H1 (cell line): ENCODE measurements at regions of chr17 and their contacts with region 1.

Region 1: GRCh38 chr17:11935734-11936406 is 61.4 kb downstream of the ZNF18 start:
- DNase-seq: peak; percentile 36 to 89
- H3K4me3 ChIP-seq: no peak overlapping the region
- H3K27ac ChIP-seq: no peak overlapping the region
- H3K4me1 ChIP-seq: no peaks in the 10 kb centered on the region
- H3K27me3 ChIP-seq: no peaks in the 10 kb centered on the region
- CTCF ChIP-seq: peak; percentile 61 to 92 (median 83)
- EP300 ChIP-seq: no peak
- POLR2A ChIP-seq: no peak
- RAD21 ChIP-seq: peak; percentile 97 to 98

Region 2: DNA sequence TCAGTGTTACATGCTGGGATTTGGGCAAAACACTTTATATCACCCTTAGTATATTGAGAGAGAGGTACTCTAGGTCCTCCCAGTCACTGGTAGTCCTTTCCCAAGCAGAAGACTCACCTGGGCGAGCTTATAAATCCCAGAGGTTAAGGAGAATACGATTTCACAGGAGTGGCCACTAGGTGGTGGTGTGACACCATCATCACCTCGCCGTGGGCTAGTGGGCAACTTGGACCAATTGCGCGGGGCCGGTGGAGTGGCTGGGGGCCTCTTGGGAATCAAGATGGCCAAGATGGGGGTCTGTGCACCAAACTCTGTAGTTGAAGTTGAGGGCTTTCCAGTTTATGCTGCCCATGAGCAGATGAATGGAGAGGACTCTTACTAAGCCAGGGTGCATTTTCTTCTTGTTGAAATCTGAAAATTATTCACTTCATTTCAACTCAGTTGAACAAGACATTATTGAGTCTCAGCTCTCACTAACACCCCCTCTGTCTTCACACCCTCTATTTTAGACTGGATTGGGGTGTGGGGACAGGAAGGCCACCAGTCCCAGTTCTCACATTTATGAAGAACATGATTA is 1059.8 kb before region 1 on chr17:
- CTCF ChIA-PET with region 1: interaction called, 20 read pairs
- POLR2A ChIA-PET with region 1: no interaction called
- DNase-seq: peak in 1 of 2 experiments; percentile 88
- H3K4me3 ChIP-seq: no peak overlapping the region
- H3K27ac ChIP-seq: no peak overlapping the region
- H3K4me1 ChIP-seq: no peaks in the 10 kb centered on the region
- H3K27me3 ChIP-seq: no peaks in the 10 kb centered on the region
- CTCF ChIP-seq: peak; percentile 74 to 83 (median 75)
- EP300 ChIP-seq: no peak
- POLR2A ChIP-seq: no peak
- RAD21 ChIP-seq: peak; percentile 91 to 96

Region 3: DNA sequence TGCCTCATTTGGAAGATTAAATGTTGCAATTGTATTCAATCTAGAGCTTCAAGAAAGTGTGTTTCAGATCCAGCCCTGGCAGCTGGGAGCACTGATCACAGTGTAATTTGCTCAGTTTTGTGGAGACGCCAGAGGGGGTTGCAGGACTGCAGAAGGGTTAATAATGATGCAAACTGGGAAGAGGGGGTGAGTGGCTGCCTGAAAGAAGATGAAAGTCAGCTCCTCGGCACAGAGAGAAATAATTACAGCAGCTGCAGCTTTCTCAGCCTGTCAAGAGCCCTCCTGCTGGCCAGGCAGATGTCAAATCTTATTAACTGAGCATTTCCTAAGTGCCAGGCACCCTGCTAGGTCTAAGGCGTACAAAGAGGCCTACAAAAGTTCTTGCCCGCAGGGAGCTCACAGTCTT is 36.3 kb before region 1 on chr17:
- CTCF ChIA-PET with region 1: interaction called, 11 read pairs
- POLR2A ChIA-PET with region 1: no interaction called
- DNase-seq: no peak
- H3K4me3 ChIP-seq: no peak overlapping the region
- H3K27ac ChIP-seq: no peak overlapping the region
- H3K4me1 ChIP-seq: peaks cover 0 to 3% (median 1%) of the 10 kb centered on the region in 4 experiments; a peak in 3 of 7 replicates
- H3K27me3 ChIP-seq: no peaks in the 10 kb centered on the region
- CTCF ChIP-seq: peak in 1 of 3 experiments; percentile 20; a peak in 1 of 4 replicates
- EP300 ChIP-seq: no peak
- POLR2A ChIP-seq: no peak
- RAD21 ChIP-seq: peak; percentile 33 to 56

Region 4: GRCh38 chr17:11916091-11916490 is 19.8 kb before region 1 on chr17:
- CTCF ChIA-PET with region 1: interaction called, 10 read pairs
- POLR2A ChIA-PET with region 1: no interaction called
- DNase-seq: no peak
- H3K4me3 ChIP-seq: no peak overlapping the region
- H3K27ac ChIP-seq: no peak overlapping the region
- H3K4me1 ChIP-seq: no peaks in the 10 kb centered on the region
- H3K27me3 ChIP-seq: no peaks in the 10 kb centered on the region
- CTCF ChIP-seq: no peak
- EP300 ChIP-seq: no peak
- POLR2A ChIP-seq: no peak
- RAD21 ChIP-seq: no peak

Region 5: GRCh38 chr17:11948789-11949188 is 12.9 kb after region 1 on chr17:
- CTCF ChIA-PET with region 1: interaction called, 62 read pairs
- POLR2A ChIA-PET with region 1: no interaction called
- DNase-seq: no peak
- H3K4me3 ChIP-seq: no peak overlapping the region
- H3K27ac ChIP-seq: no peak overlapping the region
- H3K4me1 ChIP-seq: no peaks in the 10 kb centered on the region; a peak in 1 of 7 replicates
- H3K27me3 ChIP-seq: no peaks in the 10 kb centered on the region
- CTCF ChIP-seq: no peak
- EP300 ChIP-seq: no peak
- POLR2A ChIP-seq: no peak
- RAD21 ChIP-seq: no peak

Region 6: GRCh38 chr17:11986942-11987329 is 51.1 kb after region 1 on chr17:
- CTCF ChIA-PET with region 1: interaction called, 14 read pairs
- POLR2A ChIA-PET with region 1: no interaction called
- DNase-seq: no peak
- H3K4me3 ChIP-seq: no peak overlapping the region
- H3K27ac ChIP-seq: no peak overlapping the region
- H3K4me1 ChIP-seq: peaks cover 0 to 13% (median 7%) of the 10 kb centered on the region in 4 experiments
- H3K27me3 ChIP-seq: no peaks in the 10 kb centered on the region
- CTCF ChIP-seq: peak in 2 of 3 experiments; percentile 32 to 43; a peak in 2 of 4 replicates
- EP300 ChIP-seq: no peak
- POLR2A ChIP-seq: no peak
- RAD21 ChIP-seq: peak; percentile 63 to 67

Region 7: GRCh38 chr17:12007466-12007865 is 71.6 kb after region 1 on chr17:
- CTCF ChIA-PET with region 1: no interaction called
- POLR2A ChIA-PET with region 1: no interaction called
- DNase-seq: no peak
- H3K4me3 ChIP-seq: no peak overlapping the region
- H3K27ac ChIP-seq: no peak overlapping the region
- H3K4me1 ChIP-seq: no peaks in the 10 kb centered on the region
- H3K27me3 ChIP-seq: no peaks in the 10 kb centered on the region
- CTCF ChIP-seq: no peak
- EP300 ChIP-seq: no peak
- POLR2A ChIP-seq: no peak
- RAD21 ChIP-seq: no peak